Astrocyte of the cerebellum (primary cell): ENCODE measurements at regions of chr2 and their contacts with region 1.

Region 1: GRCh38 chr2:88845772-88846661 is 154.5 kb downstream of the RPIA start:
- DNase-seq: no peak
- H3K4me3 ChIP-seq: no peak overlapping the region
- CTCF ChIP-seq: no peak

Region 2: GRCh38 chr2:88747990-88748389 is 98.0 kb before region 1 on chr2:
- in situ Hi-C with region 1: loop called (anchors 5 kb)
- DNase-seq: no peak
- H3K4me3 ChIP-seq: no peak overlapping the region
- CTCF ChIP-seq: no peak

Region 3: GRCh38 chr2:88810017-88810416 is 36.0 kb before region 1 on chr2:
- in situ Hi-C with region 1: no loop called
- DNase-seq: no peak
- H3K4me3 ChIP-seq: no peak overlapping the region
- CTCF ChIP-seq: no peak

Region 4: GRCh38 chr2:88880441-88880953 is 34.5 kb after region 1 on chr2:
- in situ Hi-C with region 1: no loop called
- DNase-seq: peak; percentile 19
- H3K4me3 ChIP-seq: no peak overlapping the region
- CTCF ChIP-seq: peak; percentile 79